Caco-2 (cell line): ENCODE measurements at regions of chr15 and their contacts with region 1.

Region 1: GRCh38 chr15:89206908-89207331 is 14.5 kb downstream of the RLBP1 start:
- DNase-seq: peak; percentile 79 to 88
- H3K4me3 ChIP-seq: no peak overlapping the region
- H3K4me3 Mint-ChIP-seq: peak overlapping the region; percentile 46
- H3K27ac Mint-ChIP-seq: no peak overlapping the region
- H3K4me1 ChIP-seq: peaks cover 6% of the 10 kb centered on the region; the same call in 1 of the 2 replicates
- H3K4me1 Mint-ChIP-seq: no peaks in the 10 kb centered on the region
- H3K27me3 ChIP-seq: no peaks in the 10 kb centered on the region
- H3K27me3 Mint-ChIP-seq: no peaks in the 10 kb centered on the region
- CTCF ChIP-seq: peak; percentile 93 to 98

Region 2: DNA sequence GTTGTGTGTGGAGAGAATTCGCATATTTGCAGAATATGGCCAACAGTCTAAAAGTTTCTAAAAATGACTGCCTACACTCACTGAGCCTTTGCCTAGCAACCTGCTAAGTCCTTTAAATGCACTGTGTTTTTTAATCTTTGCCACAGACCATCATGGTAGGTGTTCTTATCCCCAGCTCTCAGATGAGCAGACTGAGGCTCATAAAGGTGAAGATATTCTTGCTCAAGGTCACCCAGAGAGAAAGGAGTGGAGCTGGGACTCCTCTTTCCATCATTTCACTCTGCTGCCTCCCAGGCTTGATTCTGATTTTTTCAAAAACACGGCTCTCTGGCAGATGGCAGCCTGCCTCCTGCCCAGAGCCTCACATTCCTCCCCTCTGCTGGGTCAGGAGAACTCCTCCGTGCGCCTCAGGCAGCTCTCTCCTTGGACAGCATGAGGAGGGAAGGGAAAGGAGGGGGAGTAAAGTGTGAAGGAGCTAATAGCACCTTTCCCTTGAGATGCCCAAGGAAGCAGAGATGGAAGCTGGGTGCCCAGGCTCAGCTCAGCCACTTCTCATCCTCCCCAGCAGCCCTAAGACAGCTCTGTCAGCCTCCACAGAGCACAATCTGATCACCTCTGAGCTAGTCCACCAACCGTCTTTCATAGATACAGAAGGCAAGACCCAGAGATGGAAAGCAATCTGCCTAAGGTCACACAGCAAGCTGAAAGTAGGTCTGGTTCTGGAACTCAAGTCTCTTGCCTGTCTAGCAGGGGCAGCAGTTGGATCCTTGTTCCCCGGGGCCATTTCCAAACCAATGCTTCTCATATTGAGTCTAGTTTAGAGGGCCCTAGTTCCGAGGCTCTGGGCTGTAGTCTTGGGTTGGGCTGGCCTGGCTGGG is 10.8 kb after region 1 on chr15:
- CTCF ChIA-PET with region 1: interaction called, 15 read pairs
- POLR2A ChIA-PET with region 1: no interaction called
- intact Hi-C with region 1: no loop called
- DNase-seq: no peak
- H3K4me3 ChIP-seq: no peak overlapping the region
- H3K4me3 Mint-ChIP-seq: no peak overlapping the region
- H3K27ac Mint-ChIP-seq: no peak overlapping the region
- H3K4me1 ChIP-seq: no peaks in the 10 kb centered on the region
- H3K4me1 Mint-ChIP-seq: no peaks in the 10 kb centered on the region
- H3K27me3 ChIP-seq: no peaks in the 10 kb centered on the region
- H3K27me3 Mint-ChIP-seq: no peaks in the 10 kb centered on the region
- CTCF ChIP-seq: no peak

Region 3: GRCh38 chr15:89243691-89244471 is 37.0 kb after region 1 on chr15 and contains the start of gene FANCI:
- CTCF ChIA-PET with region 1: interaction called, 20 read pairs
- POLR2A ChIA-PET with region 1: no interaction called
- intact Hi-C with region 1: loop called (anchors 1 kb)
- DNase-seq: peak; percentile 94 to 96
- H3K4me3 ChIP-seq: peak within 1 kb of the TSS; percentile 83
- H3K4me3 Mint-ChIP-seq: peak within 1 kb of the TSS; percentile 85
- H3K27ac Mint-ChIP-seq: peak within 1 kb of the TSS; percentile 79
- H3K4me1 ChIP-seq: 0 out of 2 replicates have a peak, but pooled peaks cover 4% of the 10 kb centered on the region
- H3K4me1 Mint-ChIP-seq: peaks cover 24% of the 10 kb centered on the region
- H3K27me3 ChIP-seq: no peaks in the 10 kb centered on the region
- H3K27me3 Mint-ChIP-seq: no peaks in the 10 kb centered on the region
- CTCF ChIP-seq: peak; percentile 40 to 55
- total RNA-seq, gene FANCI: 94.2 and 101 TPM in 2 replicates

Region 4: DNA sequence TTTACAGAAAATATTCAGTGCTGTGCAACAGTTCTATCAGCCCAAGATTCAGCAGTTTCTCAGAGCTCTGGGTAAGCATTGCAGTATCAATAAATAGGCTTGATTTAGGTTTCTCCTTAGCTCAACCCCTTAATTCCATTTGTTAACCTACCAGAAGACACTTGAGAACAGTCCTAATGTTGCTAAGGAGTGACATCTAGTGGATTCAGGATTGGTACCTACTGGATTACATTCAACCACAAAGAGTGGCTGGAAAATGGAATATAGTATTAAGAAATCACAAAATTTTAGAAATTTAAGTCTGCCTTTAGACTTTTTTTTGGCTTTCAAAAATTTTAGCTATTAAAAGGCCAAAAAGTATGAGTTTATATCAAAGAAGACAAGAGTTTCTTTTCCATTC is 93.0 kb after region 1 on chr15:
- CTCF ChIA-PET with region 1: interaction called, 29 read pairs
- POLR2A ChIA-PET with region 1: no interaction called
- intact Hi-C with region 1: loop called (anchors 1 kb)
- DNase-seq: no peak
- H3K4me3 ChIP-seq: no peak overlapping the region
- H3K4me3 Mint-ChIP-seq: no peak overlapping the region
- H3K27ac Mint-ChIP-seq: no peak overlapping the region
- H3K4me1 ChIP-seq: no peaks in the 10 kb centered on the region
- H3K4me1 Mint-ChIP-seq: no peaks in the 10 kb centered on the region
- H3K27me3 ChIP-seq: no peaks in the 10 kb centered on the region
- H3K27me3 Mint-ChIP-seq: no peaks in the 10 kb centered on the region
- CTCF ChIP-seq: peak in 1 of 2 experiments; percentile 16